Activated CD4-positive, alpha-beta memory T cell treated with anti-CD3 and anti-CD28 coated beads, Interleukin-2, amount 10 ng/mL, durations not matched to agents 7 days and 5 days (primary cell): ENCODE measurements at regions of chr13 and their contacts with region 1.

Region 1: GRCh38 chr13:75357576-75358289 is 124.2 kb downstream of the TBC1D4 start:
- DNase-seq: peak; percentile 45
- H3K4me3 Mint-ChIP-seq: no peak overlapping the region
- H3K27ac Mint-ChIP-seq: no peak overlapping the region
- H3K4me1 Mint-ChIP-seq: peaks cover 6% of the 10 kb centered on the region
- H3K27me3 Mint-ChIP-seq: no peaks in the 10 kb centered on the region

Region 2: GRCh38 chr13:75372517-75372916 is 14.8 kb after region 1 on chr13:
- CTCF ChIA-PET with region 1: interaction called, 20 read pairs
- POLR2A ChIA-PET with region 1: no interaction called
- DNase-seq: no peak
- H3K4me3 Mint-ChIP-seq: no peak overlapping the region
- H3K27ac Mint-ChIP-seq: no peak overlapping the region
- H3K4me1 Mint-ChIP-seq: peaks cover 2% of the 10 kb centered on the region
- H3K27me3 Mint-ChIP-seq: peaks cover 3% of the 10 kb centered on the region